Activated CD8-positive, alpha-beta T cell treated with anti-CD3 and anti-CD28 coated beads for 36 hours (primary cell): ENCODE measurements at regions of chr6 and their contacts with region 1.

Region 1: DNA sequence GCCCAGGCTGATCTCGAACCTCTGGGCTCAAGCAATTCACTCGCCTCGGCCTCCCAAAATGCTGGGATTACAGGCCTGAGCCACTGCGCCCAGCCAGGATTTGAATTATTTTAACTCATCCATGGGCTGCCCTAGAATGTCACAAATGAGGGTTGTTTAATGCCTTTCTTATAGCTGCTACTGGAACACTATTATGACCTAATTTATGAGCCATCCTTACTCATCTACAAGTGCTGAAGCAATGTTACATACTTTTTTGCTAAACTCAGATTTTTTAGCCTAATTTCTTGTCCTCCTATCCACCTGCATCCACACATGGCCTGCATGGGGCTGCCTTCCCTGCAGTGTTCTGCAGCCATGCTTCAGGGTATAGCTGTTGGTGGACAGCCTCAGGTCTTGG is 59.9 kb downstream of the RTN4IP1 start:
- DNase-seq: no peak
- ATAC-seq: no peak
- H3K4me3 Mint-ChIP-seq: no peak overlapping the region
- H3K27ac Mint-ChIP-seq: no peak overlapping the region
- H3K4me1 Mint-ChIP-seq: peaks cover 5% of the 10 kb centered on the region
- H3K27me3 Mint-ChIP-seq: no peaks in the 10 kb centered on the region
- CTCF ChIP-seq: no peak

Region 2: DNA sequence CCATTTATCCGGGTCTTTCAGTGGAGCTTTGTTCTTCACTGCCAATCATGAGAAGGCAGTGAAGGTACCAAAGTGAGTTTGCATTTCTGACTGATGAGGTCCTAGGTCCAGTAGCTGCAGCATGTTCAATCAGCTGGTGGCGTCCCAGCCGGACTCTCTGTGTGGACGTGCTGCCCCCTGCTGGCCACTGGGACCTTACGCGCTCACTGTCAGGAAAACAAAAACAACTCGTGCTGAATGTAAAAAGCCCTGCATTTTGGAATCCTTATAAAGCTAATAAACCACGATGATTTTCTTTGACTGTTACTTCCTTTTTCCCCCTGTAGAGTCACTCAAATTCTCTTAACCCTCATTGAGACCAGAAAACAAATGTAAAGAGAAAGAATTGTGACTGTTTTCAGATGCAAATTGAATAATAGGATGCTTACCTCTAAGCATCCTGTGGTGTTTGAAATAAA is 410.0 kb after region 1 on chr6:
- CTCF ChIA-PET with region 1: interaction called, 15 read pairs
- POLR2A ChIA-PET with region 1: no interaction called
- intact Hi-C with region 1: no loop called
- DNase-seq: peak; percentile 89
- ATAC-seq: peak; percentile 71
- H3K4me3 Mint-ChIP-seq: no peak overlapping the region
- H3K27ac Mint-ChIP-seq: no peak overlapping the region
- H3K4me1 Mint-ChIP-seq: no peaks in the 10 kb centered on the region
- H3K27me3 Mint-ChIP-seq: peaks cover 29% of the 10 kb centered on the region
- CTCF ChIP-seq: peak; percentile 96

Region 3: DNA sequence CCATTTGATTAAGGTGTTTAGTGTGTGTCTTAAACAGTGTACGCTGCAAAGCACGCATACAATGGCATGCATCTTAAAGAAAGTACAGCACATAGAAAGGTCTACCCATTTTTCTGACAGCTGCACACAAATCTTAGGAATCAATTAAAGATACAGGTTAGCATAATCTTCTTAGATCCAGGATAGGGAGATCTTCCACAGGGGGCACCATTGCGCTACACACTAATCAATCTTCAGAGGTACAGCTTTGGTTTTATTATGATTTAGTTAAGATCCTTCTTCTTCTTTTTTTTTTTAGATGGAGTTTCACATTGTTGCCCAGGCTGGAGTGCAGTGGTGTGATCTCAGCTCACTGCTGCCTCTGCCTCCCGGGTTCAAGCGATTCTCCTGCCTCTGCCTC is 609.6 kb after region 1 on chr6:
- CTCF ChIA-PET with region 1: no interaction called
- POLR2A ChIA-PET with region 1: no interaction called
- intact Hi-C with region 1: no loop called
- DNase-seq: peak; percentile 42
- ATAC-seq: no peak
- H3K4me3 Mint-ChIP-seq: no peak overlapping the region
- H3K27ac Mint-ChIP-seq: no peak overlapping the region
- H3K4me1 Mint-ChIP-seq: no peaks in the 10 kb centered on the region
- H3K27me3 Mint-ChIP-seq: no peaks in the 10 kb centered on the region
- CTCF ChIP-seq: no peak